WTC11 (cell line): ENCODE measurements at regions of chr10 and their contacts with region 1.

Region 1: DNA sequence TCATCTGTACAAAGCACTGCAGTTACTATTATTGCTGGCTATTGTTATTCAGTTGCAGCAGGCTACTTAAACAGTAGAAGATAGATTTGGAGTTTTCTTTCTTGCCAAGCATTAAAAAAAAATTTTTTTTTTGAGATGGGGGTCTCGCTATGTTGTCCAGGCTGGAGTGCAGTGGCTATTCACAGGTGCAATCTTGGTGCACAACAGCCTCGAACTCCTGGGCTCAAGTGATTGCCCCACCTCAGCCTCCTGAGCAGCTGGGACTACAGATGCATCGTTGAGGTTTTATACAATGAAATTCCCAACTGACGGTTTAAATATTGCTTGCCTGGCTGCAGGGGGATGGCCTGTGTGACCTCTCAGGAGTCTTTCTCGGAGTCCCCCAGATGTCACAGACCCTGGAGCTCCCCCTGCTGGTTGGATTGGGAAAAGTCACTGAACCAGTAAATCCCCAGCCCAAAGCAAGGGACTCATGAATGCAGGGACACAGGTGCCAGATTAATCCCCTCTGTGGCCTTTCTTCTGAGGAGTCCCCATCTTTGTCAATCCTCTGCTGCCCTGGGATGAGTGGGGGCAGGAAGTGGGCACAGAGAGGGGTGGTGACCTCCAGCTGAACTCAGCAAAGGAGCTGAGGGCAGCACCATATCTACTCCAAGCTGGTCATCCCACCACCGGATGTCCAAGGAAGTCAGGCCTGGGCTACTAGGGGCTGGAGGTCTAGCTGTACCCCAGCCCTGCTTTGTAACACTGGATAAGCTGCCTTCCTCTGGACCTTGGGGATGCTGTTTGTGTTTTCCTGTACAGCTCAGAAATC is 149.6 kb downstream of the C10orf105 start:
- DNase-seq: peak; percentile 92
- ATAC-seq: peak; percentile 62
- H3K4me3 Mint-ChIP-seq: no peak overlapping the region
- H3K27ac Mint-ChIP-seq: no peak overlapping the region
- H3K4me1 Mint-ChIP-seq: peaks cover 7% of the 10 kb centered on the region
- H3K27me3 Mint-ChIP-seq: no peaks in the 10 kb centered on the region; the same call in 1 of the 2 replicates
- CTCF ChIP-seq: peak; percentile 91

Region 2: DNA sequence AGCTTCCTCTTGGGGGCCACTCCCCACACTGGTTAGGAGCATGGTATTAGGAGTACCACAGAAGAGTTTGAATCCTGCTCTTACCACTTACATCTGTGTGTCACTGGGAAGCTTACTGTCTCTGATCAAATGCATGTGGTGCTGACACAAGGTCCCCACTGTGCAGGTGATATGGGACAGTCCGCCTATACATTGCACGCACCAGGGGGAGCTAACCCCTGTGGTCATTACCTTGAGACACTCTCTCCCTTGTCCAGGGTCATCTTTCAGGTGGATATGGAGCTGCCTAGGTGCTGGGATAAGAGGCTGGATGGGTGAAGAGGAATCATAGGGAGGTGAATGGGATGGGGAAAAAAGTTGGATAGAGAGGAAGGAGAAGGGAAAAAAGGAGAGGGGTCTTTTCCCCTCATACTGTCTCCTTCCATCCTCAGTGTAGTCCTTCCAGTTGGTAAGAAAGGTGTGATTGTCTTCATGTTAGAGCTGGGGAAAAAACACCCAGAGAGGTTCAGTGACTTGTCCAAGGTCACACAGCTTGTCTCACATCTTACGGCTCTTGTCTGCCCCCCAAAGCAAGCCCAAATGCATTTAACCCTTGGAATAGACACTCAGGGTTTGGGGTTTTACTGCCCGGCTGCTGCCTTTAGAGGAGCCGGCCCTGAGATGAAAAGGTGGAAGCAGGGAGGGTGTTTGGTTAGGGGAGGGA is 47.4 kb before region 1 on chr10:
- CTCF ChIA-PET with region 1: interaction called, 19 read pairs
- POLR2A ChIA-PET with region 1: no interaction called
- DNase-seq: no peak
- ATAC-seq: peak; percentile 71
- H3K4me3 Mint-ChIP-seq: no peak overlapping the region
- H3K27ac Mint-ChIP-seq: no peak overlapping the region
- H3K4me1 Mint-ChIP-seq: peaks cover 6% of the 10 kb centered on the region; the same call in 1 of the 2 replicates
- H3K27me3 Mint-ChIP-seq: no peaks in the 10 kb centered on the region
- CTCF ChIP-seq: no peak

Region 3: DNA sequence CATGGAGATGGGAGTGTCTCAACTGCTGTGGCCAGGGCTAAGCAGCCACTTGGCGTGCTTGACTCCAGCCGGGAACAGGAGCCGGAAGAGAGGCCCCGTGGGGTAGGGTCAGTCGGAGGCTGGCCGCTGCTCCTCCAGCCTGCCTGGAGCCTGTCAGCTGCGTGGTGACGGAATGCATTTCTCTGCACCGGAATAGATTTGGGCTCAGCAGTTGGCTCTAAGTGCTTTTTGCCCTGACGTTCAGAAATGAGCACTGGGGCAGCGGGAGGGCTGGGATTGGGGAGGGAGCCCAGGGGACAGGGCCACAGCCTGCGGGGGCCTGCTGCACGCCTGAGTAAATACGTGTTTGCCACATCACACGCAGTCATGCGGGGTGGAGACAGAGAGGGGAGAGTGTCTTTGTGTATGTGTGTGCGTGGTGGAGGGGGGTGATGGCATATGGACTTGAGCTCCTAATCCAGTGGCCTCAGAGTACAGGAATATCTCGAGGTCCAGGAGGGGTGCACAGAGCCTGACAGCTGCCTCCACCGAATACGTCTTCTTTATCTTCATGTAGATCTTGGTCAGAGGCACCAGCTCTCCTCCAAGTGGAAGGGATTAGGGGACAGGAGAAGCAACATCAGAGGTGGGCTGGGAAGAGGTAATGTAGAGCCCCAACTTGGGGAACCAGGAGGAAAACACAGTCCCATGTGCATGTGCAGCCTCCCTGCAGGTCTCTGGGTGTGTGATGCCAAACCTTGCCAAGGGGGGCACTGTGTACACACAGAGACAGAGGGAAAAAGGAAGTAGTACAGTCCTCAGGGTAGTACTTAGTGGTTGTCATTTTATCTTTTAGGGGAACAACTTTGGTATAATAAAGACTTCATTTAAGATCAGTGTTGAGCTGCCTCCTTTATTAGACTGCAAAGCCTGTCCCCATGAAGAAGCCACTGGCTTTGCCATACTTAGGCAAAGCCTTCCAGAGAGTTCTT is 21.8 kb before region 1 on chr10:
- CTCF ChIA-PET with region 1: interaction called, 37 read pairs
- POLR2A ChIA-PET with region 1: no interaction called
- DNase-seq: peak; percentile 52
- ATAC-seq: peak; percentile 59
- H3K4me3 Mint-ChIP-seq: no peak overlapping the region
- H3K27ac Mint-ChIP-seq: no peak overlapping the region
- H3K4me1 Mint-ChIP-seq: peaks cover 60% of the 10 kb centered on the region
- H3K27me3 Mint-ChIP-seq: no peaks in the 10 kb centered on the region
- CTCF ChIP-seq: no peak; the same call in 1 of the 2 replicates

Region 4: DNA sequence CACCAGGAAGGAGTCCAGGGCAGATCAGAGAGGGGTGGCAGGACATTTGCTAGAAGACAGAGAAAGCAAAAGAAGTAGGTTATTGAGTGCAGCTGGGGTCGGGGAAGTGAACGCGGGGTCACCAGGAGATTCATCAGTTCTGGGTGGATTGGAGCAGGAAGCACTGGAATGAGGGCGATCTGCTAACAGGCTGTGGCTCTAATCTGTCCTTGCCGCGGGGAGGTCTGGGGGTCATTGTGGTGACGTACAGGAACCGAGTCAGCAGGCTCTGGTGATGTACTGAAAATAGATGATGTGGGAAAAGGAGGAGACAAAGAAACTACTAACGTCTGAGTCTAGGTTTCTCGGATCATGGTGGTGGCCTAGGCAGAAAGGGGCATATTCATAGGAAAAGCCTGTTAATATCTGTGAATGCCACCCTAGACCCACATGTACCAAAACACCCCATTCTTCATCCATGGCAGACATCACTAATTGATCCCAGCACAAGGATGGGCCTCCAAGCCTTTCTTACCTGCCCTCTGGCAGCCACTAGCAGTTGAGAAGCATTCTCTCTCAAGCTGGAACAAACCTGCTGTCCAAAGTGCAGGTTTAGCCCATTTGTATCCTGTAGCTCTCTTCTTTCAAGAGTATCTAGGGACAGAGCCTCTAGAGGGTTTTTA is 15.1 kb after region 1 on chr10:
- CTCF ChIA-PET with region 1: interaction called, 37 read pairs
- POLR2A ChIA-PET with region 1: no interaction called
- DNase-seq: no peak
- ATAC-seq: no peak
- H3K4me3 Mint-ChIP-seq: no peak overlapping the region
- H3K27ac Mint-ChIP-seq: no peak overlapping the region
- H3K4me1 Mint-ChIP-seq: peaks cover 3% of the 10 kb centered on the region; the same call in 1 of the 2 replicates
- H3K27me3 Mint-ChIP-seq: no peaks in the 10 kb centered on the region
- CTCF ChIP-seq: no peak